ENCODE measurements at regions of chr6 and their contacts with region 1.

Region 1: GRCh38 chr6:2999618-3000557 is at the start of gene NQO2:
- DNase-seq: peak; percentile 94 to 97 (median 96)
- ATAC-seq: peak; percentile 87 to 97 (median 94)
- H3K4me3 ChIP-seq: peak within 1 kb of the TSS; percentile 67 to 95 (median 86)
- H3K27ac ChIP-seq: peak within 1 kb of the TSS; percentile 66 to 95 (median 90)
- H3K4me1 ChIP-seq: peaks cover 0 to 41% (median 23%) of the 10 kb centered on the region in 12 donors
- H3K27me3 ChIP-seq: no peaks in the 10 kb centered on the region
- CTCF ChIP-seq: peak in 2 of 12 donors; percentile 1 to 13
- POLR2A ChIP-seq: peak; percentile 89 to 95
- total RNA-seq, gene NQO2: 37.0 to 76.0 (median 62.8) TPM

Region 2: DNA sequence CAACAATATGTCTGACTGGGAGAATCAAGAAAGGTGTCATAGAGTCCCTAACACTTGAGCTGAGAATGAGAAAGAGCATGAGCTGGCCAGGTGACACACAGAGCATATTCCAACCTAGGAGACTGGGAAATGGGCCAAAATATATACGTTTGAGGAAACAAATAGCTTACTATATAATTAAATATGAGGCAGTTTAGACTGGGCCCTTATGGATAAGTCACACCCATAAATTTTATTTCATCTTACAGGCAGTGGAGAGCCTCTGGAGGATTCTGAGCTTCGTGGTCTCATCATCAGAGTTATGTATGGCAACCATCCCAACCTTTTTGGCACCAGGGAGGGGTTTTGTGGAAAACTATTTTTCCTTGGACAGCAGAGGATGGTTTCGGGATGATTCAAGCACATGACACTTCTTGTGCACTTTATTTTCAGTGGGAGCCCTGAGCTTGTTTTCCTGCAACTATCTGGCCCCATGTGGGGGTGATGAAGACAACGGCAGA is 13.1 kb before region 1 on chr6:
- intact Hi-C with region 1: no loop called
- DNase-seq: no peak
- ATAC-seq: no peak
- H3K4me3 ChIP-seq: no peak overlapping the region
- H3K27ac ChIP-seq: peak overlapping the region in 5 of 12 donors; percentile 92 to 99 (median 95)
- H3K4me1 ChIP-seq: peaks cover 0 to 39% (median 27%) of the 10 kb centered on the region in 12 donors
- H3K27me3 ChIP-seq: no peaks in the 10 kb centered on the region
- CTCF ChIP-seq: no peak
- POLR2A ChIP-seq: no peak

Region 3: GRCh38 chr6:3052481-3053230 is 52.8 kb after region 1 on chr6:
- intact Hi-C with region 1: loop called (anchors 1 to 2 kb)
- DNase-seq: no peak
- ATAC-seq: no peak
- H3K4me3 ChIP-seq: peak overlapping the region in 1 of 12 donors; percentile 59
- H3K27ac ChIP-seq: peak overlapping the region in 1 of 12 donors; percentile 69
- H3K4me1 ChIP-seq: peaks cover 0 to 31% (median 16%) of the 10 kb centered on the region in 12 donors
- H3K27me3 ChIP-seq: no peaks in the 10 kb centered on the region
- CTCF ChIP-seq: no peak
- POLR2A ChIP-seq: no peak